Posterior cingulate gyrus (tissue), 11 donors: ENCODE measurements at regions of chr4 and their contacts with region 1.

Region 1: DNA sequence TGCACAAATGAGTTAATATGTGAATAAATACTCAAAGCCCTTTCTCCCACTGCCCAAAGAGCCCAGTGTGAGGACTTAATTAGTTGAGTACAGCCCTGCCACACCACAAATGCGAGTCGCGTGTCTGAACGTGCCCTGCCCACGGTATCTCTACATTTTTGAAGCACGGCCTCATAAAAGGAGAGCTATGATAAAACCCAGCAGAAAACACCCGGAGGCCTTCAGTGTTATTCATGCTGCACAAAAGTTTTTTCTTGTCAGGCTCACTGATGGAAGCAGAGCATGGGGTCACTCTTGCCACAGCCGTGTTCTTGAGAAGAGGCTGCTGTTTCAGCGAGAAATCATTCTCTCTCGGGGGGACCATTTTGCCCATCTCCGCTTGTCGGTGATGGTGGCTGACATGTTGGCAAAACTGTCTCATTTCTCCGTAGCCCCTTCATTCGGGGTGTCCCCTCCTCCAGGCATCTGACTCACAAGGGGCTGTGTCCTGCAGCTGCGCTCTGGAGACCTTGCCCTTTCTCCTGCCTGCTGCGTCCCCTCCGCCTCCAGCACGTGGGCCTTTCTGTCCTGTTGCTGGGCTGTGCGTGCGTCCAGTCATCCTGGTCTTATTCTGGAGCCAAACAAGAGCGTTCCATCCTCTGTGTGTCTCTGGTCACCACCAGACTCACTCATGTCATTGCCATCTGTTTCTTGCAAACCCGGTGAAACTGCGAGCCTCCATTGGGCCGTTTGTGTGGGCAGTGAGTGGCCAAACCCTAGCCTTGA is 88.8 kb downstream of the SORCS2 start:
- DNase-seq: peak in 2 of 10 donors; percentile 9 to 51

Region 2: DNA sequence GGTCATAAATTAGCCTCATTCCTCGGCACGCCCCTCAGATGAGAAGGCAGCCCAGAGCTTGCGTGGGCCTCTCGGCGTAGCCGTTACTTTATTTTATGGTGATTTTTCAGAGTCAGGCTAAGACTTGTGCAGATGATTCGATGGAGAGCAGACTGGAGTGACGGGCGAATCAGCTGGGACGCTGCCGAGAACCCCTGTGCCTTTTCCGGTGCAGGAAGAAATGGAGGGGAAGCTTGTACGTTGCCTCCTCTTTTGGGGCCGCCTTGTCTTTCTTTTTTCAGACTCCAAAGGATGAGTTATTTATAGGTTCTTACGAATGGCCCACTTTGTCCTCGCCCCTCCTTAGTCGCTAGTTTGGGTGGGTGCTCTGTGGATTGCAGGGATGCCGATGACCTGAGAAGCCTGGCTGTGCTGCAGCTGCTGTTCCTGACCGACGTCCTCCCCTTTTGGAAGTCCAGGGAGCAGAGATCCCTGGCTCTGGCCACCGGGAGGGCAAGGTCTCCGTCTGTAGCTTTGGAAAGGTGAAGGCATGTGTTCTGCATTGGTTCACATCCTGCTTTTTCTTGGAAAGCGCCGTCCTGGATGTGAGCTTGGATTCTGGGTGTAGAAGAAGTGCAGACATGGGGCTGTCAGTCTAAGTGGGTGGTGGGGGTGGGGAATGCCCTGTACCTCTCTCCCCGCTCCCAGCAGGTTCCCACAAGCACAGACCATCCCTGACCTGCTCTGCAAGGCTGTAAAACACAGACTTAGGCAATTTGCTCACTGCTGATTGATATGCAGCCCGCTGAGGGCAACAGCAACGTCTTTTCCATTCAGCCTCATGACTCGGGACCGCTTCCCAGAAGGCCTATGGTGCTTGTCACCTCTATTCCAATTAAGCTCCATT is 79.4 kb before region 1 on chr4:
- intact Hi-C with region 1: loop called (anchors 5 kb)
- DNase-seq: peak in 2 of 10 donors; percentile 14 to 57